ENCODE measurements at regions of chr7 and their contacts with region 1.

Region 1: GRCh38 chr7:25216837-25217236 is 11.4 kb downstream of the NPVF start:
- DNase-seq: peak; percentile 6
- H3K4me3 ChIP-seq: no peak overlapping the region
- H3K27ac ChIP-seq: no peak overlapping the region
- H3K27me3 ChIP-seq: peaks cover 5% of the 10 kb centered on the region
- CTCF ChIP-seq: peak; percentile 76

Region 2: DNA sequence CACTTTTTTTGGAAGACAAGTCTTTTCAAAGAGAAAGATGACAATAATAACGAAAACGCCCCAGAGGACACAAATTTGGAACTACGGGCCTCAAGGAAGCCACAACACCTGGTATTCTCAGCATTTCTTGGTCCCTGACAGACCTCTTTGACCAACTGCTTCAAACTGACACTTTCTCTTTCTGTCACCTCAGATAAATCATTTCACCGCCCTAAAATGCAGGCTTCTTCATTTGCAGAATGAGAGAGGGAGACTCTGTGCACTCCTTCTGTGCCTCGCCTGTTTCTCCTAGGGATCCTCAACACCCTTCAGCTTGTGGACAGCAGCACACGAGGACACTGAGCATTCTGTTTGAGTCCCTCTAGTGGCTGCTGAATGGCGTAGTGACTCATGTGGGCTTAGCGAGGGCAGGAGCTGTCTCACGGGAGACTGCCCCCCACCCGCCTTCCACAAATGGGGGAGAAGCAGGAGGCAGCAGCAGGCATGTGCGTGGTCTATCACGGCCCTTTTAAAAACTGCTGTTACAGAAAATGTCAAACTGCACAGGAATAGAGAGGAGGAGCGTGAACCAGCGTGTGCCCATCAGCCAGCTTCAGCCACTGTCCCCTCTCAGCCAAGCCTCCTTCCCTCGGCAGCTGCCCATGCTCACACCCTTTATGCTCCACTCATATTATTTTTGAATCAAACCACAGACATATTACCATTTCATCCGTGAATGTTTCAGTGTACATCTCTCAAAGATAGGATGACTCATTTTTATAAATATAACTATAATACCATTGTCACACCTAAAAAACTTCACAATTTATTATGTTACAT is 501.0 kb before region 1 on chr7:
- CTCF ChIA-PET with region 1: no interaction called
- POLR2A ChIA-PET with region 1: no interaction called
- DNase-seq: no peak
- H3K4me3 ChIP-seq: no peak overlapping the region
- H3K27ac ChIP-seq: peak overlapping the region; percentile 31
- H3K27me3 ChIP-seq: no peaks in the 10 kb centered on the region
- CTCF ChIP-seq: peak; percentile 58

Region 3: DNA sequence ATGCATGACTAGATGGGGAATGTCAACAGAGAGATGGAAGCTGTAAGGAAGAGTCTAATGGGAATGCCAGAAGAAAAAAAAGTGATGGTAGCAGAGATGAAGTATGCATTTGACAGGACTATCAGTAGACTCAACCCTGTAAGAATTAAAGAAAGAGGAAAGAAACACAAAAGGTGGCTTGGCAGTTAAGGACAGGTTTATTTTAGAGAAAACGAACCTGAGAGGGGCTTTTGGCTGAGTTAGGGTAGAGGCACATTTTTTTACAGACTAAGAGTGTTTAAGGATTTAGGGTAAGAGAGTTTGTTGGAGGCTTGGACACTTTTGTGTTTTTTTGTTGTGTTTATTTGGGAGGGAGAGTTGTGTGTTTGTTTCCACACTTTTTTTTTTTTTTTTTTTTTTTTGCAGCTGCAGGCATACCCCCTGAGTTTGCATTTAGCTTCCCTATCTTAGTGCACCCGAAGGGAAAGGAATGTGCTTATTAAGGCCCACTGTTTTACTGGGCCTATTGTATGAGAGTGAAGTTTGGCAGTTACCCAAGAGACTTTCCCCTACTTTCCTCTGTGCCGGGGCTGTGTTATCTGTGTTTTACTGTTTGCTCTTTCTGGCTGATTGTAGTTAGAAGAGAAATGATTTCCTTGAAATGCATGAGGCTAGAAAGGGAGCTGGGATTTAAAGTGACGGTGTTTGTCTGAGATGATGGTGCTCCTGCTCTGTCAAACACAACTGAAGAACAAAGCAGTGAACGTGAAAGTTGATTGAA is 20.5 kb before region 1 on chr7:
- CTCF ChIA-PET with region 1: interaction called, 12 read pairs
- POLR2A ChIA-PET with region 1: no interaction called
- DNase-seq: no peak
- H3K4me3 ChIP-seq: no peak overlapping the region
- H3K27ac ChIP-seq: no peak overlapping the region
- H3K27me3 ChIP-seq: peaks cover 4% of the 10 kb centered on the region
- CTCF ChIP-seq: no peak

Region 4: DNA sequence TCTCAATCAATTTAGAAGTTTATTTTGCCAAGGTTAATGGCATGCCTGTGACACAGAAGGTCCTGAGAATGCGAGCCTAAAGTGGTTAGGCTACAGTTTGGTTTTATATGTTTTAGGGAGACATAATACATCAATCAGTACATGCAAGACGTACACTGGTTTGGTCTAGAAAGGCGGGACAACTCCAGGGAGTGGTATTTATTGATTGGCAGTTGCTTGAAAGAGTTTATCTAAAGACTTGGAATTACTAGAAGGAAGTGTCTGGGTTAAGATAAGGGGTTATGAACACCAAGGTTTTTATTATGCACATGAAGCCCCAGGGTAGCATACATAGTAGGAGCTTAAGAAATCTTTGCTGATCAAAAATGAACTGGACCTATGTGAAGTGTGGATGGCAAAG is 10.1 kb before region 1 on chr7:
- CTCF ChIA-PET with region 1: interaction called, 17 read pairs
- POLR2A ChIA-PET with region 1: no interaction called
- DNase-seq: no peak
- H3K4me3 ChIP-seq: no peak overlapping the region
- H3K27ac ChIP-seq: no peak overlapping the region
- H3K27me3 ChIP-seq: peaks cover 4% of the 10 kb centered on the region
- CTCF ChIP-seq: no peak

Region 5: GRCh38 chr7:25228386-25228785 is 11.5 kb after region 1 on chr7 and contains the start of gene NPVF:
- CTCF ChIA-PET with region 1: interaction called, 18 read pairs
- POLR2A ChIA-PET with region 1: no interaction called
- DNase-seq: no peak
- H3K4me3 ChIP-seq: no peak within 1 kb of the TSS
- H3K27ac ChIP-seq: no peak within 1 kb of the TSS
- H3K27me3 ChIP-seq: no peaks in the 10 kb centered on the region
- CTCF ChIP-seq: no peak
- polyA plus RNA-seq, gene NPVF: not detected in 2 replicates

Region 6: DNA sequence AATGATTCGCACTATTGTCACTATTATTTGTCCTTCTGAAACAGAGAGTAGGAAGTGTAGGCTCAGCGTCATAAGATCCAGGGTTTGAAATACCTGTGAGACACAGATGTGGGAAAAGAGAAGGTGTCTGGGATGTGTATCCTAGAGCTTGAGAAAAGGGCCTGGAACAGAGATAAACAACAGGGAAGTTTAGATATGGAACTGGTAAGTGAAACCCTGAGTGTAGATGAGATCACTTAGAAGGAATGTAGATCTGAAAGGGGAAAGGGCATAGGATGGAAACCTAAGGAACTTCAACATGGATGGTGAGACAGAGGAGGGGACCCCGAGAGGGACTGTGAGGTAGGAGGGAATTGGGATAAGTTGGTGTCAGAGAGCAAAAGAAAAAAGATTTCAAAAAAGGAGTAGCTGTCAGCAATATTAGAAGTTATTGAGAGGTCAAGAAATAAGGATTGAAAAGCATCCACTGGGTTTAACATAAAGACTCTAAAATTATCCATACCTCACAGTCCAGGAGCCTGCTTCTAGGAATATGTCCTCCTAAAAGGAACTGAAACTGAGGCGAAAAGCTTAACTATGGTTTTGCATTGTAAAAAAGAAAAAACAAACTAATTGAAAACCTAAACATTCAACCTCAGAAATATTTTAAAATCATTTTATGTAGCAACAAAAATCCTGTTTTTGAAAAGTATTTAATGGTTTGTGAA is 130.7 kb after region 1 on chr7:
- CTCF ChIA-PET with region 1: no interaction called
- POLR2A ChIA-PET with region 1: no interaction called
- DNase-seq: no peak
- H3K4me3 ChIP-seq: no peak overlapping the region
- H3K27ac ChIP-seq: no peak overlapping the region
- H3K27me3 ChIP-seq: peaks cover 2% of the 10 kb centered on the region
- CTCF ChIP-seq: no peak